ENCODE measurements at regions of chr12 and their contacts with region 1.

Region 1: DNA sequence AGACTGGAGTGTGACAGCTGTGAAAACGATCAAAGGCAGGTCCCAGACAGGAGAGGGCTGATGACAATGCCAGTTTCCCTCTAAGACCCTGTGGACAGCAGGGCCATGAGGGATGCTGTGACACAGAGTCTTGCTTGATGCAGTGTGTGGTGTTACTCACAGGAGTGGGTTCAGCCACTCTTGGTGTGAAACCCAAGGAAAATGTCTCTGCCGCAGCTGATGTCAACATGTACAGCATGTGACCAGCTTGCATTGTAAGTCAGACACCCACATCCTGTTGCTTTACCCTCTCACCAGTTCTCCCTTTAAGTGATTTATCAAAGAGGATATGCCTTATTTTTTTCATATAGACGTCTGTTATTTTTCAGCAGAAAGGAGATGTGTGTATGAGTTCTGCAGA is 268.6 kb downstream of the BTG1 start:
- DNase-seq: peak; percentile 94 to 98 (median 97)
- H3K4me3 ChIP-seq: peak overlapping the region in 1 of 3 experiments; percentile 22
- H3K4me3 Mint-ChIP-seq: peak overlapping the region in 1 of 2 donors; percentile 77
- H3K27ac ChIP-seq: peak overlapping the region; percentile 46 to 89
- H3K27ac Mint-ChIP-seq: peak overlapping the region; percentile 87 to 97 (median 93)
- H3K4me1 ChIP-seq: peaks cover 26 to 34% of the 10 kb centered on the region in 2 donors
- H3K4me1 Mint-ChIP-seq: peaks cover 29% of the 10 kb centered on the region
- H3K27me3 ChIP-seq: no peaks in the 10 kb centered on the region
- H3K27me3 Mint-ChIP-seq: peaks cover 0 to 2% (median 1%) of the 10 kb centered on the region in 3 donors
- CTCF ChIP-seq: no peak

Region 2: GRCh38 chr12:91753649-91754048 is 123.4 kb before region 1 on chr12:
- intact Hi-C with region 1: no loop called
- DNase-seq: no peak
- H3K4me3 ChIP-seq: no peak overlapping the region
- H3K4me3 Mint-ChIP-seq: no peak overlapping the region
- H3K27ac ChIP-seq: no peak overlapping the region
- H3K27ac Mint-ChIP-seq: no peak overlapping the region
- H3K4me1 ChIP-seq: no peaks in the 10 kb centered on the region
- H3K4me1 Mint-ChIP-seq: no peaks in the 10 kb centered on the region
- H3K27me3 ChIP-seq: no peaks in the 10 kb centered on the region
- H3K27me3 Mint-ChIP-seq: no peaks in the 10 kb centered on the region
- CTCF ChIP-seq: no peak

Region 3: GRCh38 chr12:92021665-92022033 is 144.6 kb after region 1 on chr12:
- intact Hi-C with region 1: no loop called
- DNase-seq: no peak
- H3K4me3 ChIP-seq: no peak overlapping the region
- H3K4me3 Mint-ChIP-seq: no peak overlapping the region
- H3K27ac ChIP-seq: no peak overlapping the region
- H3K27ac Mint-ChIP-seq: no peak overlapping the region
- H3K4me1 ChIP-seq: no peaks in the 10 kb centered on the region
- H3K4me1 Mint-ChIP-seq: peaks cover 8% of the 10 kb centered on the region
- H3K27me3 ChIP-seq: no peaks in the 10 kb centered on the region
- H3K27me3 Mint-ChIP-seq: peaks cover 0 to 1% (median 1%) of the 10 kb centered on the region in 3 donors
- CTCF ChIP-seq: no peak

Region 4: DNA sequence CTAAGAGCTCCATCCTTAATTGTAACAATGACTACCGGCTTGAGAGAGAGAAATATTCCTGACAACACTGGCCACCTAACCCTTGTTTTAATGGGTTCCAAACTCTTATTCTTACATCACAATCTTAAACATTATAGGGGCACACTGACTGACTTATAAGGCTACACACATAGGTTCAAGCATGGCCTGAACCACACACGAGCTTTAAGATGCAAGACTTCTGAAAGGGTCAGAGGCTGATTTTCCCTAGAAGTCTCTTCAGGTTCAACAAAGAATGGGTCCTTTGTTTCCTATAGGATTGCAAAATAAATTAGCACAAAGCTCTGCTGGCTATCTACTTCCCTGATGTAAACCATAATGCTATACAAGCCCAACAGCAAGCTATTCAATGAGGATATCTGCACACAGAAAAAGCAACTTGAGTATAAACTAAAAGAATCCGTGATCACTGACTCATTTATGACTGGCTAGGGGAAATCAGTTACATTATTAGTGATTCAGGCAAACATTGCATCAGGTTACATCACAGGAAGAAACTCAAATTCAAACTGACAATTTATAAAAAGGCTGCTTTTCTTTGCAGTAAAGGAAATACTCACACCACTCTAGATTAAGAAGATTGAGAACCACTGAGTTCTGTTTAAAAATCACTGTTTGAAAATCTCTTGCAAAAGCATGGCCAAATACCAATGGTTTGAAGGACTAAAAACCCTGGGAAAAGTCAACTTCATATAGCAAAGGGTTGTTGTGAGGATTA is 260.1 kb after region 1 on chr12:
- intact Hi-C with region 1: loop called in 1 of 2 experiments (anchors 10 kb)
- DNase-seq: peak; percentile 71 to 88 (median 85)
- H3K4me3 ChIP-seq: peak overlapping the region; percentile 92 to 99 (median 92)
- H3K4me3 Mint-ChIP-seq: peak overlapping the region; percentile 98 to 99
- H3K27ac ChIP-seq: peak overlapping the region in 1 of 2 donors; percentile 92
- H3K27ac Mint-ChIP-seq: peak overlapping the region; percentile 87 to 96 (median 91)
- H3K4me1 ChIP-seq: peaks cover 67 to 93% of the 10 kb centered on the region in 2 donors
- H3K4me1 Mint-ChIP-seq: peaks cover 71% of the 10 kb centered on the region
- H3K27me3 ChIP-seq: no peaks in the 10 kb centered on the region
- H3K27me3 Mint-ChIP-seq: no peaks in the 10 kb centered on the region
- CTCF ChIP-seq: no peak

Region 5: DNA sequence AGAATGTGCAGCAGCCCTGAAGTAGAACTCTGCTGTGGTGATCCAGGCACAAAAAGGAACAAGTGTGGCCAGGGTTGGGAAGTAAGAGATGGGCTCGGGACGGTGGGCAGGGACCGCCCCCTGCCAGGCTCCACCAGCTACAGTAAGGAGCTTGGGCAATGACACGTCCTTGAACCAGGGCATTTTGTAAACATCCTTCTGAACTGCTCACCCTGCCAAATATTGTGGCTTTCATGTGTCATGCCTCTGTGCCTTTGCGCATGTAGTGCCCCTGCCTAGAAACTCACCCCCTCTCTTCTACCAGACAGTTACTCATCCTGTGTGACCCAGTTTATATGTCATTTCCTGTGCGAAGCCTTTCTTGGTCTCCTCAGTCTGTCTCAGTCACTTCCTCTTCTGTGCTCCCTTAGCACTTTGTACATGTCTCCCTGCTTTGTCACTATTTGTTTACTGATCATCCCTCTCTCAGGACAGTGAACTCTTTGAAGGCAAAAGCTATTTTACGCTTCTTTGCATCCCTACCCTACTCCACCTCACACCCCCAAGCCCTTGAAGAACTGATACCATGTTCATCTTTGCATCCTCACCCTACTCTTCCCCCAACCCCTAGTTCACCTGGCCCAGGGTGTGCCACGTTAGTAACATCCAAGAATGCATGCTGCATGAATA is 716.8 kb after region 1 on chr12:
- intact Hi-C with region 1: loop called in 1 of 2 experiments (anchors 10 kb)
- DNase-seq: peak; percentile 96 to 99 (median 97)
- H3K4me3 ChIP-seq: no peak overlapping the region
- H3K4me3 Mint-ChIP-seq: peak overlapping the region; percentile 26 to 66
- H3K27ac ChIP-seq: peak overlapping the region; percentile 44 to 80
- H3K27ac Mint-ChIP-seq: peak overlapping the region; percentile 78 to 96 (median 94)
- H3K4me1 ChIP-seq: peaks cover 11 to 12% of the 10 kb centered on the region in 2 donors
- H3K4me1 Mint-ChIP-seq: peaks cover 29% of the 10 kb centered on the region
- H3K27me3 ChIP-seq: no peaks in the 10 kb centered on the region
- H3K27me3 Mint-ChIP-seq: peaks cover 0 to 8% (median 2%) of the 10 kb centered on the region in 3 donors
- CTCF ChIP-seq: no peak